RWPE1 (cell line): ENCODE measurements at regions of chr6 and their contacts with region 1.

Region 1: GRCh38 chr6:165884813-165885765 is 222.0 kb upstream of the PDE10A start:
- DNase-seq: peak; percentile 63
- H3K27ac ChIP-seq: no peak overlapping the region
- CTCF ChIP-seq: peak; percentile 82

Region 2: DNA sequence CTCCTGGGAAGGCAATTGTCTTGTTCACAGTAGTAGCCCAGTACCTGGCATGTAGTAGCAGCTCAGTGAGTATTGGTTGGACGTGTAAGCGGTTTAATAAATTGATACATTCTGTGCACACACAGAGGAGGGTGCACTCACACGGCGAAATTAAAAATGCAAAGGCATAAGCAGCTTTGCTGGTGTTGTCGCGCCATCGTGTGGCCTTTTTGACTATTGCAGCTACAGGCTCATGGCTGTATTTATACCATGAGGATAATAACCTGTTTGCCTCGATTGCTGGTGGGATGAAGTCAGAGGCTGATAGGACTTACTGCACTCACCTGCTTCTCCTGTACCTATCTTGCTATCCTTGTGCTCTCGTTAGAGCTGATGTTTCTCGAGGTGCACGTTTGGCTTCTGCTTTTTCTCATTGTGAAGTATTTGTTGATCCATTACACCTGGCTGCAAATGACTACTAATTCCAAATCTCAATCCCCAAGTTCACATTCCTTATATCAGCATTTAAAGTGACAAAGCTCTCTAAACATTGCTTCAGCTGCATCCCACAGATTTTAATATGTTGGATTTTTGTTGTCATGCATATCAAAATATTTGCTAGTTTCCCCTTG is 221.1 kb after region 1 on chr6:
- CTCF ChIA-PET with region 1: interaction called, 18 read pairs
- POLR2A ChIA-PET with region 1: no interaction called
- DNase-seq: peak; percentile 52
- H3K27ac ChIP-seq: no peak overlapping the region
- CTCF ChIP-seq: peak; percentile 85

Region 3: GRCh38 chr6:166228839-166229528 is 343.9 kb after region 1 on chr6:
- CTCF ChIA-PET with region 1: no interaction called
- POLR2A ChIA-PET with region 1: no interaction called
- DNase-seq: no peak
- H3K27ac ChIP-seq: no peak overlapping the region
- CTCF ChIP-seq: no peak